Activated CD4-positive, alpha-beta T cell treated with anti-CD3 and anti-CD28 coated beads, Interleukin-2, amount 10 ng/mL, durations not matched to agents 24 days and 14 days (primary cell): ENCODE measurements at regions of chr7 and their contacts with region 1.

Region 1: DNA sequence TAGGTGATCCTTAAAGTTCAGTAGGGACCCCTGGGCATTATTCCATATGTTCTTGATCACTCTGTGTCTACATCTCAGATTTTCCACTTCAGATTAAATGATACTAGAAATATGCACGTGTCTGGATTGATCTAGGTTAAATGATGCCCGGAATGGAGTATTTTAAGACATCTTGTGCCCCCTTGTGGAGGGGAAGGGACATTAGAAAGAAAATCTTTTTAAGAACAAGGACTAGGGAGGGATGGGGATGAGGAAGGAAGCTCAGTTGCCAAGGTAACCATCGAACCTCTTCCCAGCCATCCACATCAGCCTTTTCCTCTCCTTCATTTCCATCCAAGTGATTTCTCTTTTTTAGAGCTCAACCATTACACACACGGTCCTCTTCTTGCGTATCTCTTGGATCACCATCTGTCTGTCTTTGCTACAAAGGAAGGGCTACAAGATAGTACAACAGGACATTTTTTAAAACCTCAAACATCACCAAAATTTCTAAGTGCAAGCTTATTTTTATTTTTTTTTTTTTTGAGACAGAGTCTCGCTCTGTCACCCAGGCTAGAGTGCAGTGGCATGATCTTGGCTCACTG is 40.5 kb downstream of the PRSS2 start:
- DNase-seq: peak; percentile 86
- H3K4me3 Mint-ChIP-seq: peak overlapping the region; percentile 73
- H3K27ac Mint-ChIP-seq: peak overlapping the region; percentile 99
- H3K4me1 Mint-ChIP-seq: peaks cover 75% of the 10 kb centered on the region
- H3K27me3 Mint-ChIP-seq: peaks cover 2% of the 10 kb centered on the region

Region 2: DNA sequence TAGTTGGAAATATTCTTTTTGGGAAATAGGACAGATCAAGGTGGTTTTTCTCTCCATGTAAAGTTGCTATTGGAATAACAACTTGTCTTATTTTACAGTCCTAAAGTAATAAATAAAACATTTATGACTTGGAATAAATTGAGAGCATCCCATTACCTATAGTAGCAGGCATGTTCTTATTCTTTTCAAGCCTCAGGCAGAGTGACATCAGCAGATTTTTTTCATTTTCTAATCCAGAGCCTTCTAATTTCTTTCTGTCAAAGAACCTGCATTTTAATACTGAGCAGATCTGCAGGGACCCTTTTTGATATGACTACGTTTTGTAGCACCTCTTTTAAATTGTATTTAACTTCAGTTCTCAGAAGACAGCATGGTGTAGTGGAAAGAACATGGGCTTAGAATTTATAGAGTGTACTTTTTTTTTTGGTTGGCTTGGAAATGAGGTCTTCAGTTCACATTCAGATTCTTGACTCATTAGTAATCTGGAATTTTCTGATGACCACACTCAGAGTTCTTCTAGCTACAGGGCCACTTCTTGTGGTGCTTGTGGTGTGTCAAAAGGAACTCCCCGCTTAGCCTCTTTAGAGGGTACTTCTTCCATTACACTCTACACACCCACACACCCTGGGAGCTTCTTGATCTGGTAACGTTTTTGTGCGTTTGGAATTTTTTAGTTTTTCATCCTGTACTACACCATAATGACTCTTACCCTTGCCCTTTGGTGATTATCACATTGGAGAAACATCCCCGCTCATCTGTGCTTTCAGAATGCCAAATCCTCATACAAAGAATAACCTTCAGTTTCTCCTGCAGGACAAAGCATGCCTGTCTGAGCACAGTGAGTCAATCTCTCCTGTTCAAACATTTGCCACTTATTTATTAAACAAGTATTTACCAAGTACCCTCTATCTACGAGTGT is 1225.4 kb before region 1 on chr7:
- intact Hi-C with region 1: loop called (anchors 2 kb)
- DNase-seq: peak; percentile 65
- H3K4me3 Mint-ChIP-seq: peak overlapping the region; percentile 61
- H3K27ac Mint-ChIP-seq: peak overlapping the region; percentile 94
- H3K4me1 Mint-ChIP-seq: peaks cover 58% of the 10 kb centered on the region
- H3K27me3 Mint-ChIP-seq: no peaks in the 10 kb centered on the region

Region 3: GRCh38 chr7:142337054-142338001 is 473.9 kb before region 1 on chr7:
- intact Hi-C with region 1: loop called (anchors 1 kb)
- DNase-seq: no peak
- H3K4me3 Mint-ChIP-seq: peak overlapping the region; percentile 16
- H3K27ac Mint-ChIP-seq: peak overlapping the region; percentile 79
- H3K4me1 Mint-ChIP-seq: peaks cover 8% of the 10 kb centered on the region
- H3K27me3 Mint-ChIP-seq: peaks cover 22% of the 10 kb centered on the region

Region 4: DNA sequence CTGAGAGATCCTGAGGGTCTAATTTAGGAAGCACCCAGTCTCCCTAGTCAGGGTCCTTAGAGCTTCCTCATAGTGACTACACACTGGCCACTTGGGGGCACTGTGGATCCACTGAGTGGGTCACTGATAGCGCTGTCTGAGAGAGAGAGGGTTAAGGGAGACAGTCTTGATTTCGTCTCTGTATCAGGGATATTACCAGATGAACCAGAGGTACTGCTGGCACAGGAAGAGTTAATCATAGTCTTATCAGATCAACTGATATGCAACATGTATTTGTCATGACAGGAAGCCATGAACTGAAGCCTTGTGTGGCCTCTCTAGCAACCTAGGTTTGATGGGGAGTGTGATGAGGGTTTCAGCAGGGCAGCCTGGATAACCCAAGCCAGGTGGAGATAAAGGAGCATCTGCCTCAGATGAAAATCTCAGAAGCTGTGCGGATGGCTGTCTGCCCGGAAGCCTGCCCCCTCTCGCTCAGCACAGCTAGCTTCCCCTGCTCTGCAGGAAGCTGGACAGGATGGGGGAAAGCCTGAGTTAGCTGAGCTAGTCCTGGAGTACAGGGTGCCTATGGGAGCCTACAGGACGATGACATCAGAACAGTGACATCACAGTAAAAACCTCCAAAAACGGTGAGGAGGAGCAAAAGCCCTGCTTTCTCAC is 276.0 kb before region 1 on chr7:
- intact Hi-C with region 1: loop called (anchors 1 kb)
- DNase-seq: peak; percentile 91
- H3K4me3 Mint-ChIP-seq: peak overlapping the region; percentile 74
- H3K27ac Mint-ChIP-seq: peak overlapping the region; percentile 80
- H3K4me1 Mint-ChIP-seq: peaks cover 23% of the 10 kb centered on the region
- H3K27me3 Mint-ChIP-seq: peaks cover 12% of the 10 kb centered on the region

Region 5: DNA sequence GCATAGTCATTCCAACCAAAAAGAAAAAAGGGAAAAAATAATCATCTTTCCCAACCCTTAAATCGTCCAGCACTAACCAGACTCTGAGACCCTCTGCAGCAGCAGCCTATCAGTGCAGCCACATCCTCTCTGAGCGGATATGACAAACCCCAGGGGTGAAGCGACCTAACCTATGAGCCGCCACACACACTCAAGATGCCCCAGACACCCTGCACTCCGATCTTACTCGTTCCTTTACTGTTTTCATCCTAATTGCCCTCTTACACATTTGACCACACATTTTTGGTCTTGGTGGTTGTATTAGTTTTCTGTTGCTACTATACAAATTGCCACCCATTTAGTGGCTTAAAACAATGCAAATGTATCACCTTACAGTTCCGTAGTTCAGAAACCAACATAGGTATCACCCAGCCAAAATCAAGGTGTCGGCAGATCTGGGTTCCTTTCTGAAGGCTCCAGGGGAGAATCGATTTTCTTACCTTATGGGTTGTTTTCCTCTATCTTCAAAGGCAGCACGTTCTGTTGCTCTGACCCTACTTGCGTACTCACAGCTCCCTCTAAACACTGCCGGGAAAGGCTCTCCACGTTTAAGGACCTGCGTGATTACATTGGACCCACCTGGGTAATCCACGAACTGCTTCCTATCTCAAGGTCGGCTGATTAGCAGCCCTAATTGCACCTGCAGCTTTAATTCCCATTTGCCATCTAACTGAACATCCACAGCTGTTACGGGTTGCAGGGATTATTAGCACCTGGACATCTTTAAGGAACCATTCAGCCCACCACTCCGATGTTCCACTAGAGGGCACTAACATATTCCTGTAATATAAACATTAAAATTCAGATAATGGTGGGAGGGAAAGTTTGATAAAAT is 99.3 kb before region 1 on chr7:
- intact Hi-C with region 1: loop called (anchors 2 kb)
- DNase-seq: peak; percentile 68
- H3K4me3 Mint-ChIP-seq: peak overlapping the region; percentile 84
- H3K27ac Mint-ChIP-seq: peak overlapping the region; percentile 81
- H3K4me1 Mint-ChIP-seq: peaks cover 45% of the 10 kb centered on the region
- H3K27me3 Mint-ChIP-seq: no peaks in the 10 kb centered on the region

Region 6: DNA sequence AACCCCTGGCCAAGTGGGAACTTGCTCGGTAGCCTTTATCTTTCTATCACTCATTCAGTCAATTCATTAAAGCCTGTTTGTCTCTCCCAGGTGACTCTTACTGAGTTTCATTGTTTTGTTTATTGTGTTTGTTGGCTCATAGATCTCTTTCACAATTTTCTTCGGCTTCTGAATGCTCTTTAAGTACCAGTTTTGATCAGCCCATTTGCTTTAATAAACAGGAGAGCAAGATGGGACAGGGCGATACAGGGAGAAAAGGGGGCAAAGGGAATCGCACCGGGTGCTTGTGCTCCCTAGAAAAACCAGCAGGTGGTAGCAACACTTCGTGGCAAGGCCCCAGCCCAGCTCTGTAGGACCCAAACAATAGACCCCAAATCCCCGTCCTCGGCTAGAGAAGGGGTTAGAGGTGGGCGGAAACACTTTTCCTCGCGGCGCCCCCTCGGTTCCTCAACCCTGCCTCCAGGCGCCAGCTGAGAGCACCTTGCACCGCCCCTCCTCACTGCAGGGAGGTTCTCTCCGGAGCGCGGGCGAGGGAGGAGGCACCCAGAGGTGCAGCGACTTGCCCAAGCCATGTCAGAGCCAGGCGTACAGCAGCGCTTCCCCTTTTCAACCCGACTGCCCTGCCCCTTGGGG is 42.6 kb after region 1 on chr7:
- intact Hi-C with region 1: loop called (anchors 2 kb)
- DNase-seq: peak; percentile 90
- H3K4me3 Mint-ChIP-seq: peak overlapping the region; percentile 94
- H3K27ac Mint-ChIP-seq: peak overlapping the region; percentile 82
- H3K4me1 Mint-ChIP-seq: peaks cover 14% of the 10 kb centered on the region
- H3K27me3 Mint-ChIP-seq: peaks cover 17% of the 10 kb centered on the region

Region 7: GRCh38 chr7:143380255-143380645 is 569.0 kb after region 1 on chr7:
- intact Hi-C with region 1: loop called (anchors 2 kb)
- DNase-seq: peak; percentile 96
- H3K4me3 Mint-ChIP-seq: peak overlapping the region; percentile 87
- H3K27ac Mint-ChIP-seq: peak overlapping the region; percentile 86
- H3K4me1 Mint-ChIP-seq: peaks cover 44% of the 10 kb centered on the region
- H3K27me3 Mint-ChIP-seq: no peaks in the 10 kb centered on the region